GM12878 (cell line): ENCODE measurements at regions of chr2 and their contacts with region 1.

Region 1: DNA sequence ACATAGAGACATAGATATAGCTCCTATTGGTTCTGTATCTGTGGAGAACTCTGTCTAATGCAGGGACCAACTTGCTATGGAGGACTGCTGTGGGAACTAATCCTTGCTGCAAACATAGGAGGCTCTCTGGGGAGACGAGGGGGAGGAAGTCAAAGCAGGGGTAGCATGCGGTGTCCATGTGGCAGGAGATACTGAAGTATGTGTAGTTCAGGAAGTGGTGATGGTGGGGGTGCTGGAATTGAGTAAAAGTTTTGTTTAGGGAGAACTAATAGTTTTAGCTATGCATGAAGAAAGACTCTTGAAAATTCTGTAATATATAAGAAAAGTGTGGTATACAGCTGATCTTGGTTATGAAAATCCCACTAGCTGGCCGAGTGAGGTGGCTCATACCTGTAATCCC is 62.0 kb downstream of the ANKRD44 start:
- DNase-seq: no peak
- ATAC-seq: peak; percentile 45
- H3K4me3 ChIP-seq: no peak overlapping the region
- H3K27ac ChIP-seq: peak overlapping the region; percentile 76
- H3K4me1 ChIP-seq: peaks cover 19% of the 10 kb centered on the region
- H3K27me3 ChIP-seq: no peaks in the 10 kb centered on the region
- CTCF ChIP-seq: no peak
- EP300 ChIP-seq: no peak
- POLR2A ChIP-seq: no peak
- RAD21 ChIP-seq: no peak

Region 2: GRCh38 chr2:196875414-196875813 is 373.2 kb before region 1 on chr2:
- CTCF ChIA-PET with region 1: no interaction called
- POLR2A ChIA-PET with region 1: no interaction called
- RAD21 ChIA-PET with region 1: no interaction called
- SMC1A ChIA-PET with region 1: no interaction called
- in situ Hi-C with region 1: no loop called
- intact Hi-C with region 1: no loop called
- DNase-seq: no peak
- ATAC-seq: no peak
- H3K4me3 ChIP-seq: no peak overlapping the region
- H3K27ac ChIP-seq: no peak overlapping the region
- H3K4me1 ChIP-seq: no peaks in the 10 kb centered on the region
- H3K27me3 ChIP-seq: no peaks in the 10 kb centered on the region
- CTCF ChIP-seq: no peak
- EP300 ChIP-seq: no peak
- POLR2A ChIP-seq: no peak
- RAD21 ChIP-seq: no peak

Region 3: DNA sequence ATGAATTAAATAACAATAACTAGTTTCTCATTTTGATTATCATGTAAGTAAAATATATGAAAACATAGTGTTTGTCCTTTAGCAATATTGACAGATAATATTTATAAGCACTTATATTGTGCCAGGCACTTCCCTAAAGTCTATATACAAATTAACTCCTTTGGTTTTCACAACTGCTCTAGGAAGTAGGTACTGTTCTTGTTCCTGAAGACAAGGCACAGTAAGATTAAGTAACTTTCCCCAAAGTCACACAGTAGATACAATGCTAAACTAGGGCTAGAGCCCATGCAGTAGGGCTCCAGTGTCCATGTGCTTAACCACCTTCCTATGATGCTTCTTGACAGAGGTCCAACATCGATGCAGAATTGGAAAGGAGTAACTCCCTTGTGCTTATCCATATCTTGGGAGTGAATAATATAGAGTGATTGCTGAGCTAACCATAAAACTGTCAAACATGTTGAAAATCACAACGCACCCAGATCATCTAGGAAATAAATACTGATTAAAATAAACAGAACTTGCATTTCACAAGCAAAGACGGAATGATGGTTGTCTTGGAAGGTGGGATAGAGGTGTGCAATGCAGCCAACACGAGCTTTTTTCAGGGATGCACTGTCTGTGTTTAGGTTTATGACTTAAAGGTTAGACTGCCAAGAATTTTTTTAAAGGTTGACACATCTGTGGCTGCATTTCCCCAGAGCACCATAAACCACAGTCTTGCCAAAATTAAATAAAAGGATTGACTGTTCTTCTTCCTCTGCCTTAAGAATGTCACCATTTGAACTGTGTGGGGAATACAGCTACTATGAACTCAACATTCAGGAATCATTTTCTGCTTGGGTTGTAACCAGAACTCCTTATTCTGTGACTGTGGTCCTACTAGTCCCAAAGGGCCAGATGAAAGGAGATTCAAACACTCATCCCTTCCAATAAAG is 18.8 kb before region 1 on chr2:
- CTCF ChIA-PET with region 1: interaction called, 6 read pairs
- POLR2A ChIA-PET with region 1: interaction called, 3 read pairs
- RAD21 ChIA-PET with region 1: no interaction called
- SMC1A ChIA-PET with region 1: interaction called, 10 read pairs
- in situ Hi-C with region 1: no loop called
- intact Hi-C with region 1: no loop called
- DNase-seq: no peak
- ATAC-seq: no peak
- H3K4me3 ChIP-seq: no peak overlapping the region
- H3K27ac ChIP-seq: no peak overlapping the region
- H3K4me1 ChIP-seq: no peaks in the 10 kb centered on the region
- H3K27me3 ChIP-seq: no peaks in the 10 kb centered on the region
- CTCF ChIP-seq: no peak
- EP300 ChIP-seq: no peak
- POLR2A ChIP-seq: no peak
- RAD21 ChIP-seq: no peak